ENCODE measurements at regions of chr1 and their contacts with region 1.

Region 1: DNA sequence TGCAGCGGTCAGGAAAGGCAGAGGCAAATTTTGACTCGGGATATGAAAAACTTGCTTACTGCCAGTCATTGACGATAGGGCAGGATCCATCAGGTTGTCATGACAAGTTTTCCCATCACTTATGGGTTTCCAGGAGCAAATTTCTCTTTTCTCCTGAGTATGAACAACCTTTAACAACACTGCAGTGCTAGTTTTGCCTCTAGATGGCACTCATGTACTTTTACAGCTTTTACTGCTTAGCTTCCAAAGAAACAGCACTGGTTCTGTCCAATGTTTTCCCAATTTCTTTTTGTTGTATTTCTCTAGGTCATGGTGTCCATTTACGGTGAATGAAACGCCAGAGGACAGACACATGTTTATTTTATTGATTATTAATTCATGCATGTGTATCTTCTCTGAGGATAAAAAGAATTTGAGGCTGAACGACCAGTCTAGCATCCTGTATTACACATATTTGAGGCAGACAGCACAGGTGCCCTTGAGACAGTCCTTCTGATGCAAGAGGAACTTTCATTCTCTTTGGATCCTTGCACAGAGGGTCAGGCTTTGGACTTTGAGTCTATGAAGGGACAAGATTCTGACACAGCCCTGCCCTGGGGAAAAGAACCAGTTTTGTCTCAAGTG is 112.3 kb upstream of the TRABD2B start:
- DNase-seq: peak in 1 of 2 experiments; percentile 48
- H3K4me3 ChIP-seq: no peak overlapping the region
- H3K4me3 Mint-ChIP-seq: no peak overlapping the region
- H3K27ac Mint-ChIP-seq: no peak overlapping the region
- H3K4me1 ChIP-seq: no peaks in the 10 kb centered on the region
- H3K4me1 Mint-ChIP-seq: no peaks in the 10 kb centered on the region
- H3K27me3 ChIP-seq: no peaks in the 10 kb centered on the region
- H3K27me3 Mint-ChIP-seq: peaks cover 2% of the 10 kb centered on the region
- CTCF ChIP-seq: peak; percentile 72 to 76

Region 2: GRCh38 chr1:48026275-48026674 is 83.2 kb before region 1 on chr1:
- CTCF ChIA-PET with region 1: no interaction called
- POLR2A ChIA-PET with region 1: no interaction called
- intact Hi-C with region 1: no loop called
- DNase-seq: no peak
- H3K4me3 ChIP-seq: no peak overlapping the region
- H3K4me3 Mint-ChIP-seq: no peak overlapping the region
- H3K27ac Mint-ChIP-seq: no peak overlapping the region
- H3K4me1 ChIP-seq: no peaks in the 10 kb centered on the region
- H3K4me1 Mint-ChIP-seq: no peaks in the 10 kb centered on the region
- H3K27me3 ChIP-seq: no peaks in the 10 kb centered on the region
- H3K27me3 Mint-ChIP-seq: no peaks in the 10 kb centered on the region
- CTCF ChIP-seq: no peak

Region 3: DNA sequence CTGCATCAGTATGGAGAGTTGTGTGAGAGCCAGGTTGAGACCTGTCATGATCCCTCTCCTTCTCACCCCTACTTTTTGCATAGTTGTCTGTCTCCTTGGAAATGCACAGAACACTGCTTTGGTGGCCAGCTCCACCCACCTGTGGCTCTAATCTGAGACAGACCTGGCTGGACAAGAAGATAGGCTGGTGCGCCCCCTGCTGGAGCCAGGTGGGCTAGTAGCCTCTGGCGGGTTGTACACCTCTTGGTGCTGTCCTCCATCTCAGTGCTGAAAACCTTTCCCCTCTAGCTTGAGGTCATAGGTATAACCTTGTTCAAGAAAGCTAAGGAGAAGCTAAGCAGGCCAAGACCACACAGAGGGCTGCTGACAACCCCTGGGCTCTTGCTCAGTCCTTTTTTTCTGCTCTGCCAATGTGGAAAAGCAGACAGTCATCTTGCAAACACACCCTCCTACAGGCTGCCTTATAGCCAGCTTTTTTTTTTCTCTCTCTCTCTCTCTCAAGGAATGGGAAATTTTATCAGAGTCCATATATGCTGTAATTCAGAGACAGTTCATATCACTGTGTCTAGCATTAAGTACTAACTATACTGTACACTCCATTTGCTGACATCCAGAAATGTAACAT is 421.3 kb after region 1 on chr1:
- CTCF ChIA-PET with region 1: no interaction called
- POLR2A ChIA-PET with region 1: no interaction called
- intact Hi-C with region 1: loop called (anchors 5 kb)
- DNase-seq: peak; percentile 72 to 78
- H3K4me3 ChIP-seq: no peak overlapping the region
- H3K4me3 Mint-ChIP-seq: no peak overlapping the region
- H3K27ac Mint-ChIP-seq: no peak overlapping the region
- H3K4me1 ChIP-seq: no peaks in the 10 kb centered on the region
- H3K4me1 Mint-ChIP-seq: no peaks in the 10 kb centered on the region
- H3K27me3 ChIP-seq: no peaks in the 10 kb centered on the region
- H3K27me3 Mint-ChIP-seq: peaks cover 15% of the 10 kb centered on the region
- CTCF ChIP-seq: peak; percentile 58 to 78

Region 4: DNA sequence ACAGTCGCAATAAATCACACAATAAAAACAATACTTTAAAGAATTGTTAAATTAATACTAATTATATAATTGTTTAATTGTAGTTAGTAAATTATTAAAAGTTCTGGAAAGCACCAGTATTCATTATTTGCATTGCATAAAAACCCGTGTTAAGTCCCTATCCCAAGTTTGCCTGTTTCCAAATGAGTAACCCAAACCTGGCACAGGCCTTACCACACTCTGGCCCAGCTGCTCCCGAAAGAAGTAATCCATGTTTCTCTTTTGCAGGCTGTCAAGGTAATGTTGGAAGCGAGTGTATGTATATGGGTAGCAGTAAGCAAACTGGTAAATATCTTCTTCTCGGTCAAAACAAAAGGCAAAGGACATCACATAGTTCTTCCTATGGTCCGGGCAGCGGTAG is 935.9 kb after region 1 on chr1:
- CTCF ChIA-PET with region 1: no interaction called
- POLR2A ChIA-PET with region 1: no interaction called
- intact Hi-C with region 1: no loop called
- DNase-seq: no peak
- H3K4me3 ChIP-seq: no peak overlapping the region
- H3K4me3 Mint-ChIP-seq: no peak overlapping the region
- H3K27ac Mint-ChIP-seq: no peak overlapping the region
- H3K4me1 ChIP-seq: no peaks in the 10 kb centered on the region
- H3K4me1 Mint-ChIP-seq: no peaks in the 10 kb centered on the region
- H3K27me3 ChIP-seq: no peaks in the 10 kb centered on the region
- H3K27me3 Mint-ChIP-seq: no peaks in the 10 kb centered on the region
- CTCF ChIP-seq: no peak